B cell (primary cell): ENCODE measurements at regions of chr6 and their contacts with region 1.

Region 1: GRCh38 chr6:31328355-31328960 is 28.5 kb downstream of the HLA-B start:
- DNase-seq: no peak
- ATAC-seq: no peak
- H3K4me3 ChIP-seq: no peak overlapping the region
- H3K4me3 Mint-ChIP-seq: no peak overlapping the region
- H3K27ac ChIP-seq: no peak overlapping the region
- H3K27ac Mint-ChIP-seq: no peak overlapping the region
- H3K4me1 ChIP-seq: no peaks in the 10 kb centered on the region
- H3K4me1 Mint-ChIP-seq: no peaks in the 10 kb centered on the region
- H3K27me3 ChIP-seq: no peaks in the 10 kb centered on the region
- H3K27me3 Mint-ChIP-seq: peaks cover 8% of the 10 kb centered on the region
- CTCF ChIP-seq: no peak

Region 2: GRCh38 chr6:31186052-31186734 is 142.3 kb before region 1 on chr6:
- CTCF ChIA-PET with region 1: no interaction called
- POLR2A ChIA-PET with region 1: no interaction called
- intact Hi-C with region 1: no loop called
- DNase-seq: peak; percentile 51
- ATAC-seq: no peak
- H3K4me3 ChIP-seq: peak overlapping the region in 1 of 5 experiments; percentile 26
- H3K4me3 Mint-ChIP-seq: peak overlapping the region; percentile 66
- H3K27ac ChIP-seq: peak overlapping the region; percentile 41 to 77
- H3K27ac Mint-ChIP-seq: peak overlapping the region; percentile 99
- H3K4me1 ChIP-seq: peaks cover 6 to 15% of the 10 kb centered on the region in 2 donors
- H3K4me1 Mint-ChIP-seq: peaks cover 19% of the 10 kb centered on the region
- H3K27me3 ChIP-seq: no peaks in the 10 kb centered on the region
- H3K27me3 Mint-ChIP-seq: no peaks in the 10 kb centered on the region
- CTCF ChIP-seq: no peak

Region 3: GRCh38 chr6:31293343-31293742 is 35.1 kb before region 1 on chr6:
- CTCF ChIA-PET with region 1: interaction called, 4 read pairs
- POLR2A ChIA-PET with region 1: no interaction called
- intact Hi-C with region 1: loop called (anchors 5 kb)
- DNase-seq: no peak
- ATAC-seq: no peak
- H3K4me3 ChIP-seq: no peak overlapping the region
- H3K4me3 Mint-ChIP-seq: no peak overlapping the region
- H3K27ac ChIP-seq: no peak overlapping the region
- H3K27ac Mint-ChIP-seq: no peak overlapping the region
- H3K4me1 ChIP-seq: no peaks in the 10 kb centered on the region
- H3K4me1 Mint-ChIP-seq: no peaks in the 10 kb centered on the region
- H3K27me3 ChIP-seq: peaks cover 0 to 17% (median 8%) of the 10 kb centered on the region in 4 experiments
- H3K27me3 Mint-ChIP-seq: peaks cover 24% of the 10 kb centered on the region
- CTCF ChIP-seq: no peak